ENCODE measurements at regions of chr3 and their contacts with region 1.

Region 1: GRCh38 chr3:176933704-176934103 is 263.6 kb downstream of the TBL1XR1 start:
- DNase-seq: no peak
- ATAC-seq: no peak
- H3K4me3 ChIP-seq: no peak overlapping the region
- H3K27ac ChIP-seq: no peak overlapping the region
- H3K4me1 ChIP-seq: no peaks in the 10 kb centered on the region
- H3K27me3 ChIP-seq: no peaks in the 10 kb centered on the region
- CTCF ChIP-seq: no peak
- POLR2A ChIP-seq: no peak

Region 2: DNA sequence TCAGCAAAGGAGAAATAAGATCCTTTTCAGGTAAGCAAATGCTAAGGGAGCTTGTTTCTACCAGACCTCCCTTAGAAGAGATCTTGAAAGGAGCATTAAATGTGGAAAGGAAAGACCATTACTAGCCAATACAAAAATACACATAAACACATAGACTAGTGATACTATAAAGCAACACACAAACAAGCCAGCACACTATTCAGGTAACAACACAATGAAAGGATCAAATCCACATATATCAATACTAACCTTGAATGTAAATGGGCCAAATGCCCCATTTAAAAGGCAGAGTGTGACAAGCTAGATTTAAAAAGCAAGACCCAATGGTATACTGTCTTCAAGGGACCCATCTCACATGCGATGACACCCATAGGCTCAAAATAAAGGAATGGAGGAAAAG is 54.0 kb before region 1 on chr3:
- intact Hi-C with region 1: loop called (anchors 5 kb)
- DNase-seq: no peak
- ATAC-seq: no peak
- H3K4me3 ChIP-seq: no peak overlapping the region
- H3K27ac ChIP-seq: no peak overlapping the region
- H3K4me1 ChIP-seq: no peaks in the 10 kb centered on the region
- H3K27me3 ChIP-seq: no peaks in the 10 kb centered on the region
- CTCF ChIP-seq: no peak
- POLR2A ChIP-seq: no peak